ENCODE measurements at regions of chr9 and their contacts with region 1.

Region 1: DNA sequence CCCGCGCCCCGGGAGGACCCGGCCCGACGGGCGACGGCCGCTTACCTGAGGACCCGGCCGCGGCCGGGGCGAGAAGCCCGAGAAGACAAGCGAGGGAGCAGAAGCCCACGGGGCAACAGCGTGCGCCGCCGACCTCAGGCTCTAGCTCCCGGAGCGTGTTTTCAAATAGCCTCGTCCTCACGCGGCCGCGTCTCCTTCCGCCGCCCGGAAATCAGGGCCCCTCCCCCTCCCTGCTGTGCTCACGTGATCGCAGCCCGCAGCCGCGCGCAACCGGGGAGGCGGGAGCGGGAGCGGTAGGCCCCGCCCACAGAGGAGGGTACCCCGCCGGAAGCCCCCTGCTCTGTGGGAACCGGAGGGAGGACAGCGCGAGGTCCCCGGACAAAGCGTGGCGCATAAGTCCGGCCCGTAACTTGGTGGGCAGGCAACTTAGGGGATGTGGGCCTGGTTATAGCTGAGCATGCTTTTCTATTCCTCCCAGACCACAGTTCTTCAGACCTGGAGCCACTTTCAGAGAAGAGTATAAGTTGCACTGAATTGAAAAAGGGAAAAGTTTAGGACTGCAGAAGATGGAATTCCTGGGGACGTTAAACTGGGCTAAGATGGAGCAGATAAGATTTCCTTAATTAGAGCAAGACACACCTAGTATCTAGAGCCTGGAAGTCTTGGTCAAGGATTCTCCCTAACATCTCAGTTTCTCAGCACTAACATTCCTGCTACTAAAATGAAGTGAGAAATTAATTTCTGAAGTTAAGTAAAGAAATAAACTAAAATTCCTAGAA is at the start of gene TEX10:
- DNase-seq: peak; percentile 84 to 86 (median 85)
- H3K4me3 ChIP-seq: peak within 1 kb of the TSS; percentile 78 to 85
- H3K4me3 Mint-ChIP-seq: peak within 1 kb of the TSS; percentile 77 to 97 (median 96)
- H3K27ac ChIP-seq: peak within 1 kb of the TSS; percentile 78
- H3K27ac Mint-ChIP-seq: peak within 1 kb of the TSS; percentile 34 to 94 (median 89)
- H3K4me1 ChIP-seq: peaks cover 38% of the 10 kb centered on the region
- H3K4me1 Mint-ChIP-seq: peaks cover 35 to 56% (median 43%) of the 10 kb centered on the region in 4 donors
- H3K27me3 ChIP-seq: no peaks in the 10 kb centered on the region
- H3K27me3 Mint-ChIP-seq: no peaks in the 10 kb centered on the region
- total RNA-seq, gene TEX10: 22.4 to 22.8 TPM

Region 2: GRCh38 chr9:100098887-100099721 is 253.8 kb before region 1 on chr9 and contains the starts of genes ERP44 and INVS:
- CTCF ChIA-PET with region 1: no interaction called
- POLR2A ChIA-PET with region 1: interaction called, 3 read pairs
- intact Hi-C with region 1: loop called (anchors 5 kb)
- DNase-seq: peak; percentile 96 to 99 (median 96)
- H3K4me3 ChIP-seq: peak within 1 kb of the TSS; percentile 85 to 89
- H3K4me3 Mint-ChIP-seq: peak within 1 kb of the TSS; percentile 94 to 100 (median 100)
- H3K27ac ChIP-seq: peak within 1 kb of the TSS; percentile 80
- H3K27ac Mint-ChIP-seq: peak within 1 kb of the TSS; percentile 91 to 99 (median 98)
- H3K4me1 ChIP-seq: peaks cover 26% of the 10 kb centered on the region
- H3K4me1 Mint-ChIP-seq: peaks cover 21 to 56% (median 36%) of the 10 kb centered on the region in 4 donors
- H3K27me3 ChIP-seq: no peaks in the 10 kb centered on the region
- H3K27me3 Mint-ChIP-seq: no peaks in the 10 kb centered on the region
- total RNA-seq, gene ERP44: 16.5 to 17.0 TPM
- total RNA-seq, gene INVS: 17.6 to 22.9 TPM

Region 3: GRCh38 chr9:100411472-100412283 is 58.8 kb after region 1 on chr9:
- CTCF ChIA-PET with region 1: no interaction called
- POLR2A ChIA-PET with region 1: interaction called, 19 read pairs
- intact Hi-C with region 1: loop called (anchors 1 kb)
- DNase-seq: peak; percentile 80 to 88 (median 81)
- H3K4me3 ChIP-seq: peak overlapping the region; percentile 58 to 59
- H3K4me3 Mint-ChIP-seq: peak overlapping the region; percentile 86 to 94 (median 90)
- H3K27ac ChIP-seq: no peak overlapping the region
- H3K27ac Mint-ChIP-seq: peak overlapping the region; percentile 57 to 92 (median 85)
- H3K4me1 ChIP-seq: peaks cover 8% of the 10 kb centered on the region
- H3K4me1 Mint-ChIP-seq: peaks cover 9 to 14% (median 13%) of the 10 kb centered on the region in 4 donors
- H3K27me3 ChIP-seq: no peaks in the 10 kb centered on the region
- H3K27me3 Mint-ChIP-seq: peaks cover 5 to 20% of the 10 kb centered on the region in 2 donors

Region 4: GRCh38 chr9:100437860-100438805 is 85.2 kb after region 1 on chr9:
- CTCF ChIA-PET with region 1: interaction called, 26 read pairs
- POLR2A ChIA-PET with region 1: interaction called, 3 read pairs
- intact Hi-C with region 1: no loop called
- DNase-seq: peak; percentile 52 to 69 (median 60)
- H3K4me3 ChIP-seq: no peak overlapping the region
- H3K4me3 Mint-ChIP-seq: no peak overlapping the region
- H3K27ac ChIP-seq: no peak overlapping the region
- H3K27ac Mint-ChIP-seq: no peak overlapping the region
- H3K4me1 ChIP-seq: no peaks in the 10 kb centered on the region
- H3K4me1 Mint-ChIP-seq: peaks cover 0 to 13% (median 12%) of the 10 kb centered on the region in 4 donors
- H3K27me3 ChIP-seq: no peaks in the 10 kb centered on the region
- H3K27me3 Mint-ChIP-seq: no peaks in the 10 kb centered on the region

Region 5: GRCh38 chr9:101398068-101398929 is 1045.4 kb after region 1 on chr9 and contains the starts of genes MRPL50 and ZNF189:
- CTCF ChIA-PET with region 1: no interaction called
- POLR2A ChIA-PET with region 1: no interaction called
- intact Hi-C with region 1: loop called (anchors 10 kb)
- DNase-seq: peak; percentile 95 to 100 (median 97)
- H3K4me3 ChIP-seq: peak within 1 kb of the TSS; percentile 75 to 86
- H3K4me3 Mint-ChIP-seq: peak within 1 kb of the TSS; percentile 98 to 100 (median 99)
- H3K27ac ChIP-seq: peak within 1 kb of the TSS; percentile 93
- H3K27ac Mint-ChIP-seq: peak within 1 kb of the TSS; percentile 98 to 100 (median 99)
- H3K4me1 ChIP-seq: peaks cover 64% of the 10 kb centered on the region
- H3K4me1 Mint-ChIP-seq: peaks cover 61 to 87% (median 78%) of the 10 kb centered on the region in 4 donors
- H3K27me3 ChIP-seq: no peaks in the 10 kb centered on the region
- H3K27me3 Mint-ChIP-seq: no peaks in the 10 kb centered on the region
- total RNA-seq, gene MRPL50: 20.9 to 23.0 TPM
- total RNA-seq, gene ZNF189: 22.1 to 23.2 TPM